Mucosa of descending colon (tissue), 3 donors: ENCODE measurements at regions of chr12 and their contacts with region 1.

Region 1: DNA sequence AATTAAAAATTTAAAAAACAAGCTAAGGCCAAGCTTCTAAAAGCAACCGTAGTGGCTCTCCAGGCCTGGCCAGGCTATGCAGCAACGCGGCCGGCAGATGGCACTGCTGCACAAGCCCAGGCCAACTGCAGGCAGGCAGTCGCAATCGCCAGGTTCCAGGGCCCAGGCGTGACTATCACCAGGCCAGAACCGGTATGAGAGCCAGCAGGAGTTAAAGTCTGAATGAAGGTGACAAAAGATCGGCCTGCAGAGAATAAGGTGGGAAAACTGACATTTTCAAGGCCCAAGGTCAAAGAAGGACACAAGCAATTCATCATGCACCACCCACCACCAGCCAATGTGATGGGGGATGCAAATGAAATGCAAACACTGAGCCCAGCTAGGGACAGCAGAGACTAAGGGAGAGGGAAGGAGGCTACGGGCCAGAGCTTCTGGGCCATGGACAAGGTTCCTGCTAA is 43.6 kb upstream of the ANO2 start:
- DNase-seq: peak; percentile 76 to 87 (median 85)
- ATAC-seq: peak; percentile 98
- H3K4me3 ChIP-seq: no peak overlapping the region
- H3K4me1 ChIP-seq: no peaks in the 10 kb centered on the region
- CTCF ChIP-seq: peak; percentile 94

Region 2: DNA sequence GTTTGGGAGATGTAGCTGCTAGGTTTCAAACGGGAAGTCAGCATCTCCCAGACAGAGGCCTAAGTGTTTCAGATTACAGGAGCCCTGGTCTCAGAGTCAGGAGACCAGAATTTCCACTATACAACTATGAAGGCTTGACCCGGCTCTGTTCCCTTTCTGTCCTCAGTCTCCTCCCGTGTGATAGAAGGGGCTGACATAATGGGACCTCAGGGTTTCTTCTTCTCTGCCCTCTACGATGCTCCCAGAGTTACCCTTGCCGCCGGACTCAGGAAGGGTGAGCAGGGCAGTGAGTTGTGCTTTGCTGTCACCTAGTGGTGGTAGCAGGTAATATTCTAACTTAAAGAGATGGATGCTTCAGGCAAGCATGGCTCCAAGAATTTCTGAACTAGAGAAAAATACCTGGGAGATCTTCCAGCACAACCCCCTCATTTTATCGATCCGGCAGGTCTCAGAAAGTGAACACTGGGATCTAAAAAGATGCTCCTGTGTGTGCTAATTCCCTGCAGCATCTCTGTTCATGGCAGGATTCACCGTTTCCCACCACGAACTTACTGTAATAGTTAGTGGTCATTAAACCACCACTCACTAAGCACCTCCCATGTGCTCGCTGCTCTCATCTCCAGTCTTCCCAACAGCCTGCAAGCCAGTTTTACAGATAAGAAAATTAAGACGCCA is 51.3 kb after region 1 on chr12:
- intact Hi-C with region 1: loop called (anchors 2 to 5 kb)
- DNase-seq: peak in 1 of 3 donors; percentile 67
- ATAC-seq: peak; percentile 85
- H3K4me3 ChIP-seq: no peak overlapping the region
- H3K4me1 ChIP-seq: no peaks in the 10 kb centered on the region
- CTCF ChIP-seq: peak; percentile 68

Region 3: DNA sequence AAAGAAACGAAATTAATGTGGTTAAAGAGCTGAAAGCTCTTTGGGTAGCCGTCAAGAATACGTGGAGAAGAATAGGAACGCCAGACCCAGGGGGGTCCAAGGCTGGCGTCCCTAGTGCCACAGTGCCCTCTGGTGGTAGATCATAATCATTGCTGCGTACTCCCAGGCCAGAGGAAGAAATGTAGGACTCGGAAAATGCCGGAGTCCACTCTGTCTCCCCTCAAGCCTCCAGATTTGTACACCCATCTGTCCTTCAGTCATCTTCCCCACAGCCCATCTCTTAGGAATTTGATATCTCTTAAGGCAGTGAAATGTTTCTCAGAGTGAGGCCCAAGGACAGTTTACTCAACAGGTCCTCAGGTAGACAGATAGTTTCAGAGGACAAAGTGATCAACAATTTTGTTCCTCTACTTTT is 296.4 kb after region 1 on chr12:
- intact Hi-C with region 1: loop called in 1 of 2 experiments (anchors 10 kb)
- DNase-seq: peak in 2 of 3 donors; percentile 63 to 64
- ATAC-seq: peak; percentile 78
- H3K4me3 ChIP-seq: no peak overlapping the region
- H3K4me1 ChIP-seq: peaks cover 9% of the 10 kb centered on the region
- CTCF ChIP-seq: peak; percentile 60